Activated B cell treated with CpG ODN at 0.5 μM for 24 hours (primary cell): ENCODE measurements at regions of chr19 and their contacts with region 1.

Region 1: GRCh38 chr19:18636183-18636968 is 452 bp upstream of the KLHL26 start:
- DNase-seq: peak; percentile 99
- ATAC-seq: peak; percentile 86
- H3K4me3 Mint-ChIP-seq: peak overlapping the region; percentile 88
- H3K27ac Mint-ChIP-seq: peak overlapping the region; percentile 84
- H3K4me1 Mint-ChIP-seq: peaks cover 23% of the 10 kb centered on the region
- H3K27me3 Mint-ChIP-seq: no peaks in the 10 kb centered on the region
- CTCF ChIP-seq: no peak

Region 2: DNA sequence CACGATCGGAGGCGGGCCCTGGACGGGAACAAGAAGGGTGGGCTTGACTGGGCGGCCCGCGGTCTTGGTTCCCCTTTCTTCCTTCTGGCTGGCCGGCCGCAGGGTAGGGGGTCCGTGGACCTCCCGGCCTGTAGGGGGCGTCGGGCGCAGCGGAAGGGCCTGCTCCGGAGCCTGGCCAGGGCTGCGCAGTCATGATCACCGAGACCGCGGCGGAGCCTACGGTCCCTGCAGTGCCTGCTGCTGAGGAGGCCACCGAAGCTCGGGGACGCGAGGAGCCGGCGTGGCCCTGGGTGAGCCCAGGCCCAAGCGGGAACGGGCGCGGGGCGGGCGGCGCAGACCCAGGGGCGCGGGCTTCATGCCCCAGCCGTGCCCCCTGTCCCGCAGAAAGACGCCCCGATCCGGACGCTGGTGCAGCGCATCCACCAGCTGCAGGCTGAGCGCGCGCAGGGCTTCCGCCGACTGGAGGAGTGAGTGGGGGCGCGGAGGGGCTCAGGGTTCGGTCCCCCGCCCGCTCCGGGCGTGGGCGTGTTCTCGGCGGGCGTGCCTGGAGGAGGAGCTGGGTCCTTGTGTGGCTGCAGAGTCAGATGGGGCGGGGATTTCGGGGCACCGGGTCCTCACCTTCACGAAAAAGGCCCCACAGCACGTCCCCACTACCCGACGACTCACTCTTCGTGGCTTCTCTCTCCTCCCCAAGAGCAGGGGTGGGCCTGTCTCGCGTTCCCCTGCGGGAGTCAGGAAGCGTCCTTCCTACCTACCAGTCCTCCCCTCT is 47.6 kb before region 1 on chr19 and contains the start of gene REX1BD:
- CTCF ChIA-PET with region 1: no interaction called
- POLR2A ChIA-PET with region 1: no interaction called
- intact Hi-C with region 1: loop called (anchors 1 kb)
- DNase-seq: peak; percentile 79
- ATAC-seq: peak; percentile 79
- H3K4me3 Mint-ChIP-seq: peak within 1 kb of the TSS; percentile 87
- H3K27ac Mint-ChIP-seq: peak within 1 kb of the TSS; percentile 83
- H3K4me1 Mint-ChIP-seq: peaks cover 41% of the 10 kb centered on the region
- H3K27me3 Mint-ChIP-seq: peaks cover 2% of the 10 kb centered on the region
- CTCF ChIP-seq: peak; percentile 61
- total RNA-seq, gene REX1BD: 83.7 and 85.9 TPM in 2 replicates

Region 3: DNA sequence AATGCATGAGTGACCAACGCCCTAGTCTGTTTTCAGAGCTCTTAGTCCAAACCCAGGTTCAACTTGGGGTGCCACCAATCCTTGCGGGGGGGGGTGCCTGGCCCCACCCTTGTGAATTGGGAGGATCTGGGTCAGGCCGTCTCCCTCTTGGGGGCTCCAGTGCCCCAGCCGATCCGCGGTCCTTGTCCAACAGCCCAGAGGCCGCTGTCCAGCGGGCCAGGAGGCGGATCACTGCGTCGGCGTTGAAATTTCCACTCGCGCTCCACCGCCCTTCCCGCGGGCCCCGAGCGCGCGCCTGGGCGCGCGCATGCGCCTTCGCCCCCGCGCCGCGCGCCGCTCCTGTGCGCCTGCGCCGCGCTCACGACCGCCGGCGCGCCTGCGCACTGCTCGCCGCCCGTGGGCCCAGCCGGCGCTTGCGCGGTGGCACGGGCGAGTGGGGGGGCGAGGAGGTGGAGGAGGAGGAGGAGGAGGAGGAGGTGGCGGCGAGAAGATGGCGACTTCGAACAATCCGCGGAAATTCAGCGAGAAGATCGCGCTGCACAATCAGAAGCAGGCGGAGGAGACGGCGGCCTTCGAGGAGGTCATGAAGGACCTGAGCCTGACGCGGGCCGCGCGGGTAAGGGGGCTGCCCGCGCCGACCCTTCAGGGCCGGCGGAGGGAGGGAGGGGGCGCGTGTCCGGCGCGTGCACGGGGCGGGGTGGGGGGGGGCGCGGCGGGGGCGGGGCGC is 47.0 kb after region 1 on chr19 and contains the start of gene CRTC1:
- CTCF ChIA-PET with region 1: no interaction called
- POLR2A ChIA-PET with region 1: no interaction called
- intact Hi-C with region 1: loop called (anchors 2 kb)
- DNase-seq: peak; percentile 96
- ATAC-seq: peak; percentile 87
- H3K4me3 Mint-ChIP-seq: peak within 1 kb of the TSS; percentile 92
- H3K27ac Mint-ChIP-seq: peak within 1 kb of the TSS; percentile 95
- H3K4me1 Mint-ChIP-seq: peaks cover 31% of the 10 kb centered on the region
- H3K27me3 Mint-ChIP-seq: no peaks in the 10 kb centered on the region
- CTCF ChIP-seq: no peak
- total RNA-seq, gene CRTC1: 13.1 and 15.5 TPM in 2 replicates

Region 4: DNA sequence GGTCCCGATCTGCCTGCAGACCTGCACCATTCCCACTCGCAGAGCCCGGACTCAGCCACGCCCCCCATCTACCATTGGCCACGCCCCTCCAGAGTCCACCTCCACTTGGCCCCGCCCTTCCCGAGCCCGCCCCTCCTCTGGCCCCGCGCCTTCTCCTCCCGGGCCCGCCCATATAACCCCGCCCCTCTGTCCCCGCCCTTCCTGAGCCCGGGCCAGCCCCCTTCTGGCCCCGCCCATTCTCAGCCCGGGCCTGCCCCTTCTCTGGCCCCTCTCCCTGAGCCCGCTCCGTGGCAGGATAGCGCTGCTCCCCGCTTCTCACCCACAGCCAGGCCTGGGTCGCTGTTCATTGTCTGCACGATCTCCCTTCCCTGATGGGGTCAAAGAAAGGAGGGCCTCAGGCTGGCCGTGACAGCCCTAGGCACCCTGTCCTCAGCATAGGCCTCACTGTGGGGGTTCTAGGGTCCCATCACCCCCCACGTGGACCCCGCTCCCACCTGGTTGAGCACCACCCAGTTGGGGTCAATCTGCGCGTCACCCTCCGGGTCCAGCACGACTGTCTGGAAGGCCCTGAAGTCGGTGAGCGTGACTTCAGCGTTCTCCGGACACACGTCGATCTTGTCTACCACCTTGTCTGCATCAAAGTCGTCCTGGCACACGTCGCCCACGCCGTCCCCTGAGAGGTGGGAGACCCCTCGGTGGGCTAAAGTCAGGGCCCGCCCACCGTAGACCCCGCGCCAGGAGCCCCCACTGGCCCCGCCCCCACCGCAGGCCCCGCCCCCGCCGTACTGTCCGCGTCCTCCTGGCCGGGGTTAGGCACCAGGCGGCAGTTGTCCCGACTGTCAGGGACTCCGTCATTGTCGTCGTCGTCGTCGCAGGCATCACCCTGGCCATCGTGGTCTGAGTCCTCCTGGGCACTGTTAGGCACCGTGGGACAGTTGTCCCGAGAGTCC is 149.1 kb after region 1 on chr19:
- CTCF ChIA-PET with region 1: no interaction called
- POLR2A ChIA-PET with region 1: no interaction called
- intact Hi-C with region 1: loop called (anchors 5 kb)
- DNase-seq: peak; percentile 40
- ATAC-seq: peak; percentile 67
- H3K4me3 Mint-ChIP-seq: peak overlapping the region; percentile 44
- H3K27ac Mint-ChIP-seq: peak overlapping the region; percentile 41
- H3K4me1 Mint-ChIP-seq: peaks cover 42% of the 10 kb centered on the region
- H3K27me3 Mint-ChIP-seq: peaks cover 47% of the 10 kb centered on the region
- CTCF ChIP-seq: no peak

Region 5: DNA sequence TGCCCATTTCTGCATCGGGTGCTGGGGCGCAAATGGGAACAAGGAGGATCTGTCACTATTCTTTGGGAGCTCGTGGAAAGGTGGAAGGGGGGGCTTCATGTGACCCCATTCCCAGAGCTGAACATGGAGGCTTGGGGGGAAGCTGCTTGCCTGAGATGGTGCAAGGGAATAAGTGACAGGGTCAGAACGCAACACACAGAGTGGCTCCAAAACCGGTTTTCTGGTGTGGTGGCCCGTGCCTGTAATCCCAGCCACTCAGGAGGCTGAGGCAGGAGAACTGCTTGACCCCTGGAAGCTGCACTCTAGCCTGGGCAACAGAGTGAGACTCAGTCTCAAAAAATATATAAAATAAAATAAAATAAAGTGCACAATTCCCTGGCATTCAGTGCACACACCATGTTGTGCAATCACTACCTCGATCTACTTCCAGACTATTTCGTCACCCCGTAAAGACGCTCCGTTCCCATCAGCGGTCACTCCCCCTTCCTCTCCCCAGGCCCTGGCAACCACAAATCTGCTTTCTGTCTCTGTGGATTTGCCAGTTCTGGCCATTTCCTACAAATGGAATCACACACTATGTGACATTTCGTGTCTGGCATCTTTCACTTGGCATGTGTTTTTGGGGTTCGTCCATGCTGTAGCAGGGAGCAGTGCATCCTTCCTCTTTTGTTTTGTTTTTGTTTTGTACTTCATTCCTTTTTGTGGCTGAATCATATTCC is 172.9 kb after region 1 on chr19:
- CTCF ChIA-PET with region 1: no interaction called
- POLR2A ChIA-PET with region 1: no interaction called
- intact Hi-C with region 1: no loop called
- DNase-seq: no peak
- ATAC-seq: no peak
- H3K4me3 Mint-ChIP-seq: no peak overlapping the region
- H3K27ac Mint-ChIP-seq: no peak overlapping the region
- H3K4me1 Mint-ChIP-seq: peaks cover 2% of the 10 kb centered on the region
- H3K27me3 Mint-ChIP-seq: peaks cover 9% of the 10 kb centered on the region
- CTCF ChIP-seq: no peak

Region 6: GRCh38 chr19:18856385-18857126 is 220.2 kb after region 1 on chr19:
- CTCF ChIA-PET with region 1: no interaction called
- POLR2A ChIA-PET with region 1: no interaction called
- intact Hi-C with region 1: no loop called
- DNase-seq: no peak
- ATAC-seq: no peak
- H3K4me3 Mint-ChIP-seq: no peak overlapping the region
- H3K27ac Mint-ChIP-seq: no peak overlapping the region
- H3K4me1 Mint-ChIP-seq: peaks cover 12% of the 10 kb centered on the region
- H3K27me3 Mint-ChIP-seq: no peaks in the 10 kb centered on the region
- CTCF ChIP-seq: no peak

Region 7: GRCh38 chr19:19033426-19034203 is 397.2 kb after region 1 on chr19 and contains the starts of genes ARMC6 and SUGP2:
- CTCF ChIA-PET with region 1: no interaction called
- POLR2A ChIA-PET with region 1: no interaction called
- intact Hi-C with region 1: loop called (anchors 5 kb)
- DNase-seq: peak; percentile 94
- ATAC-seq: peak; percentile 76
- H3K4me3 Mint-ChIP-seq: peak within 1 kb of the TSS; percentile 92
- H3K27ac Mint-ChIP-seq: peak within 1 kb of the TSS; percentile 91
- H3K4me1 Mint-ChIP-seq: peaks cover 31% of the 10 kb centered on the region
- H3K27me3 Mint-ChIP-seq: no peaks in the 10 kb centered on the region
- CTCF ChIP-seq: no peak
- total RNA-seq, gene ARMC6: 33.3 and 37.9 TPM in 2 replicates
- total RNA-seq, gene SUGP2: 121 and 122 TPM in 2 replicates

Region 8: GRCh38 chr19:19192078-19192882 is 555.9 kb after region 1 on chr19 and contains the starts of genes BORCS8 and RFXANK:
- CTCF ChIA-PET with region 1: no interaction called
- POLR2A ChIA-PET with region 1: no interaction called
- intact Hi-C with region 1: loop called (anchors 1 kb)
- DNase-seq: peak; percentile 91
- ATAC-seq: peak; percentile 85
- H3K4me3 Mint-ChIP-seq: peak within 1 kb of the TSS; percentile 99
- H3K27ac Mint-ChIP-seq: peak within 1 kb of the TSS; percentile 99
- H3K4me1 Mint-ChIP-seq: peaks cover 49% of the 10 kb centered on the region
- H3K27me3 Mint-ChIP-seq: no peaks in the 10 kb centered on the region
- CTCF ChIP-seq: no peak
- total RNA-seq, gene BORCS8: 51.8 and 52.3 TPM in 2 replicates
- total RNA-seq, gene RFXANK: 95.4 and 96.9 TPM in 2 replicates